Activated T-helper 1 cell treated with anti-CD3 and anti-CD28 coated beads, Interleukin-12 subunit alpha, Interleukin-12 subunit beta, Interleukin-2, Interleukin-4 antibody, amounts not matched to agents 30 ng/mL and 10 ng/mL and 1 ng/mL, durations not matched to agents 14 hours and 24 hours and 36 hours (primary cell): ENCODE measurements at regions of chr7 and their contacts with region 1.

Region 1: GRCh38 chr7:134458806-134459698 is at the start of gene AKR1B1:
- DNase-seq: peak; percentile 87
- H3K4me3 Mint-ChIP-seq: peak within 1 kb of the TSS; percentile 90
- H3K27ac Mint-ChIP-seq: peak within 1 kb of the TSS; percentile 81
- H3K4me1 Mint-ChIP-seq: peaks cover 44% of the 10 kb centered on the region
- H3K27me3 Mint-ChIP-seq: no peaks in the 10 kb centered on the region
- total RNA-seq, gene AKR1B1: 99.7 and 111 TPM in 2 replicates

Region 2: GRCh38 chr7:134126966-134127848 is 331.8 kb before region 1 on chr7 and contains the start of gene LRGUK:
- intact Hi-C with region 1: loop called (anchors 1 kb)
- DNase-seq: peak; percentile 72
- H3K4me3 Mint-ChIP-seq: peak within 1 kb of the TSS; percentile 88
- H3K27ac Mint-ChIP-seq: peak within 1 kb of the TSS; percentile 42
- H3K4me1 Mint-ChIP-seq: peaks cover 14% of the 10 kb centered on the region
- H3K27me3 Mint-ChIP-seq: peaks cover 19% of the 10 kb centered on the region
- total RNA-seq, gene LRGUK: 0.05 TPM in 1 of 2 replicates, not detected in the other

Region 3: DNA sequence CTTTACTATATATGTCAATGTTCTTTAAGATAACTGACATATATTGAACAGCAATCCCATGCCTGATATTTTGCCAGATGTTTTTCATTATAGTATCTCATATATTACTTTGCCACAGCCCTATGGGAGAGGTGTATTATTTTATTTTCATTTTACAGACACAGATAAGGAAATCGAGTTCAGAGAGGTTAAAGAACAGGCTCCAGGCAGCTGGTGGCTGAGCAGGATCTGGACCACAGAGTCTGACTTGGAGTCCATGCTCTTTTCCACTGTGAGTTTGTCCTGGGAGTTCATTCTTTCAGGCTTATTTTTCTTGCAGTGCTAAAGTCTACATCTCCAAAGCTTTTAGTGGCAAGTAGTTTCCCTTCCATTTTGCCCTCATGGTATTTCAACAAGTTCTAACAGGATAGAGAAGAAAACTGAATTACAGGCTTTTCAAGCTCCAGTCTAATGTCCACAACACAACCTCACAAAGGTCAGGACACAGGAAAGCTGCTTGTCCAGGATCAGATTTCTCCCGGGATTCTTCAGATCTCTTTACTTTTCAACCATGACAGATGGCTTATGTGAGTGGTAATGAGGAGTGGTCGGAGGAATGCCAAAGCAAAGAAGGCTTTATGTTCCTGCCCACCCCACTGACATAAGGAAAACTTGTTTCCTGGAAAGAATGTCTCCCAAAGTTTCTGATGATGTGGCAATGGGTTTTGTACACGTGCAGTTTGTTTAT is 129.3 kb before region 1 on chr7:
- intact Hi-C with region 1: no loop called
- DNase-seq: no peak
- H3K4me3 Mint-ChIP-seq: no peak overlapping the region
- H3K27ac Mint-ChIP-seq: no peak overlapping the region
- H3K4me1 Mint-ChIP-seq: no peaks in the 10 kb centered on the region
- H3K27me3 Mint-ChIP-seq: peaks cover 4% of the 10 kb centered on the region

Region 4: GRCh38 chr7:134491963-134492362 is 32.9 kb after region 1 on chr7:
- intact Hi-C with region 1: loop called (anchors 2 kb)
- DNase-seq: no peak
- H3K4me3 Mint-ChIP-seq: no peak overlapping the region
- H3K27ac Mint-ChIP-seq: no peak overlapping the region
- H3K4me1 Mint-ChIP-seq: no peaks in the 10 kb centered on the region
- H3K27me3 Mint-ChIP-seq: peaks cover 10% of the 10 kb centered on the region

Region 5: DNA sequence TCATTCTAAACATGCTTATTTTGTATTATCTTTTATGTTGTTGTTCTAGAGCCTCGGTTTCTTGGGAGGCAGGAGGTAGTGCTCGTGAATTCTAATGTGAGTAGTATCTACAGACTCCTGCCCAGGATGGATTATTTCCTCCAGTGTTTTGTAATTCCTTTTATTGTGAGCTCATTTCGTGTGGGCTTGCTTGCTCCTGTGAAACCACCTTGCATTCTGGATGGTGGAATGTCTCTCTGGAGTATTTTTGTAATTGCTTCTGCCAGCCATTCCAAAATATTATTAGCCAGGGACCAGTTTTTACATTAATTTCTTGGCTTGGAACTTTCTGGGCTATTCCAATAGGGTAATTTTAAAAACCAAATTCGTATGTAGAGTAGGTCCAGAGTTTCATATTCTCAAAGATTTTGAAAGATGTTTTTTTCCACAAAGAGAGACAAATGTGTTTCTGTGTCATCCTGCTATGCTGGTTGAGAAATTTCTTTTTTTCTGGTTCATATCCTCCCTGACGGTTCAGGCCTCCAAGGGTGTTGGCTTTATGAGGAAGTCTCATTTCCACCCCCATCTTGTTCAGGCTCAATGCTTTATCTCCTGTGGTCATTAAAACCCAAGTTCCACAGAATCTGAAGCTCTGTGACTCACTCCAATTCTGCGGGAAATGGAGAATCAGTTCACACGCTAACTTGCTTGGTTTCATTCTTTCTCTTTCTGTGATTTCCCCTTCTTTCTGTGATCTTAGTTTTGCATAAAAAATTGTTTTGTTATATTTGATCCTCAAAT is 278.7 kb after region 1 on chr7:
- intact Hi-C with region 1: loop called (anchors 2 kb)
- DNase-seq: peak; percentile 5
- H3K4me3 Mint-ChIP-seq: no peak overlapping the region
- H3K27ac Mint-ChIP-seq: peak overlapping the region; percentile 80
- H3K4me1 Mint-ChIP-seq: peaks cover 22% of the 10 kb centered on the region
- H3K27me3 Mint-ChIP-seq: peaks cover 4% of the 10 kb centered on the region

Region 6: DNA sequence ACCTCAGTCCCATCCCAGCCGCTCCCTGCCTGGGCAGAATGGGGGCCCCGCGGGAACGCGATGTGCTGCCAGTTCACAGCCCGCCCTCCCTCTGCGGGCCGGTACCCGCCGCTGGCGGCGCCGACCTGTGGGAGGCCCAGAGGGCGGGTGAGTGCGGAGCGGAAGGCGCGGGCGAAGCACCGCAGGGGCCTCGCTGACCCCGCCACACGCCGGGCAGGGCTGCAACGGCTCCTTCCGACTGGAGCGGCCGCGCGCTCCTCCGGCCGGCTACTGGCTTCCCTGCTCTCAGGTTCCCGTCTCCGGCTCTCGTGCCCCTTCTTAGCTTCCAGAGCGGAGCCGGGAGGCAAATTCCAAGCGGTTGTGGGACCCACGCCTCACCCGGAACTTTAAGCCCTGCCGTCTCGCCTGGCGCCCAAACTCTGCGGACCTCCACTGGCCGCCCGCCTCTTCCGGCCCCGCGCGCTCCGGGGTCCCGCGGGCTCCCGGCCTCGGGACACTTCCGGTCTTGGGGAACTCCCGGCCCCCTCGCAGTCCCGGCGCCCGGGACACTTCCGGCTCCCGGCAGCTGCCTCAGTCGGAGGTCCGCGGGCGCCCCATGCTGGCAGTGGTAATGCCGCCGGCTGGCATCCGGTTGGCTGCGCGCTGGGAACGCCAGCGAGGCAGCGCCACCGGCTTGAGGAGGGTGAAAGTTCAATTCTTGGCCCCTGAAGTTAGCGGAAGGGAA is 711.4 kb after region 1 on chr7 and contains the start of gene CYREN:
- intact Hi-C with region 1: loop called (anchors 2 kb)
- DNase-seq: peak; percentile 84
- H3K4me3 Mint-ChIP-seq: peak within 1 kb of the TSS; percentile 95
- H3K27ac Mint-ChIP-seq: peak within 1 kb of the TSS; percentile 96
- H3K4me1 Mint-ChIP-seq: peaks cover 38% of the 10 kb centered on the region
- H3K27me3 Mint-ChIP-seq: no peaks in the 10 kb centered on the region
- total RNA-seq, gene CYREN: 58.8 and 58.9 TPM in 2 replicates

Region 7: DNA sequence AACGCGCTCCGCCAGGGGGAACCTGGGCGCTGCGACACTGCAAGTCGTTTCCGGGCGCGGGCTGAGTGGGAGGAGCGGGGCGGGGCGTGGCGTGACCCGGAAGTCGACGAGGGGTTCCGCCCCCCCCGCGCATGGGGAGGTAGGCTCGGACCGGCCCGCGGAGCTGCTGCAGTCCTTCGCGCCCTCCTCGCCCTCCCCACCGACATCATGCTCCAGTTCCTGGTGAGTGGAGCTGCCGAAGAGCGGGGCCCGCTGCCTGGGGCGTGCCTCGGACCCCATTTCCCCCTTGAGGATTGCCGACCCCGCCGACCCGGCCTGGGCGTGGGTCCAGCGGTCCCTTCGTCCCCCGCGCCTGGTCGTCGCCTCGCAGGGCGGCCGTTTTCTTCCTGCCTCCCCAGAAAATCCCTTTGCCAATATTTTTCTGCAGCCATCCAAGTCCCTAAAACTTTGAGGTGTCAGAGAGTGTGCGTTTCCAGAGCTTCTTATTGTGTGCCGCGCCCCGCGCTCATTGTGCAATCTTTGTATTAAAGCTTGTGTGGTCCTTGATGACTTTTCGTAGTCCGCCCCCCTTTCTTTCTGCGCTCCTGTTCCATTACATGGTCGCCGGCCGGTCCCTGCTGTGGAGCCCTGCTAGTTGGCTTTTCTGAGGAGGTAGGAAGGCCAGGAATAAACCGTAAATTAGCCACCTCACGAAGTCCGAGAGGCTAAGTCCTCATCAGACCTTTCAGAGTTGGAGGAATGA is 1203.5 kb after region 1 on chr7 and contains the start of gene STMP1:
- intact Hi-C with region 1: loop called (anchors 10 kb)
- DNase-seq: peak; percentile 93
- H3K4me3 Mint-ChIP-seq: peak within 1 kb of the TSS; percentile 97
- H3K27ac Mint-ChIP-seq: peak within 1 kb of the TSS; percentile 93
- H3K4me1 Mint-ChIP-seq: peaks cover 22% of the 10 kb centered on the region
- H3K27me3 Mint-ChIP-seq: no peaks in the 10 kb centered on the region
- total RNA-seq, gene STMP1: 22.7 and 24.7 TPM in 2 replicates